Psoas muscle (tissue), 8 donors: ENCODE measurements at regions of chr14 and their contacts with region 1.

Region 1: DNA sequence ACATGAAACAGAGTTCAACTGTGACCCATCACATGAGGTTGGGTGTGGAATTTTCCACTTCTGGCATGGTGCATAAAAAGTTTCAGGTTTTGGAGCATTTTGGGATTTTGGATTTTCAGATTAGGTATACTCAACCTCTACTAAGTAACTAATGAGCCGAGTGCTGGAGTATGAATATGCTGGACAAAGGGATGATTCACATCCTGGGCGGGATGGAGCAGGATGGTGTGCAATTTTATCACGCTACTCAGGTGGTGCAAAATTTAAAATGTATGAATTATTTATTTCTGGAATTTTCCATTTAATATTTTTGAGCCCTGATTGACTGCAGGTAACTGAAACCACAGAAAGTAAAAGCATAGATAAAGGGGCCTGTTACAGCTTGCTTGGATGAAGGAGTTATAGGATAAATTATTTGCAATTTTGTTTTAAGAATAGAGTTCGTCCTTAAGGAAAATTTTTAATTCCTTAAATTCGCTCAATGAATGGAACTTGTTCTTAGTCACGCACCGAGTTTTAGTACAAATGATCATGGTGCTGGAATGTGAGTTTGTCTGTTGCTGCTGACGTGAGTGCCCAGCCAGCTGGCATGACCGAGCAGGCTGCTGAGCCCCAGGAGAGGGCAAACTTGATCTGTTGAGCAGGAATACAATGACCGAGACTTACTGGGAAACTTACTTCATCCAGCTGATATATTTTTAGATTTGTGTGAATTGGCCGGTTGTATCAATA is 176.3 kb downstream of the ESR2 start:
- DNase-seq: peak; percentile 73 to 85
- ATAC-seq: peak; percentile 79 to 88 (median 84)
- H3K4me3 ChIP-seq: peak overlapping the region; percentile 44
- H3K27ac ChIP-seq: peak overlapping the region; percentile 95
- H3K4me1 ChIP-seq: peaks cover 47% of the 10 kb centered on the region
- H3K27me3 ChIP-seq: no peaks in the 10 kb centered on the region
- CTCF ChIP-seq: no peak

Region 2: DNA sequence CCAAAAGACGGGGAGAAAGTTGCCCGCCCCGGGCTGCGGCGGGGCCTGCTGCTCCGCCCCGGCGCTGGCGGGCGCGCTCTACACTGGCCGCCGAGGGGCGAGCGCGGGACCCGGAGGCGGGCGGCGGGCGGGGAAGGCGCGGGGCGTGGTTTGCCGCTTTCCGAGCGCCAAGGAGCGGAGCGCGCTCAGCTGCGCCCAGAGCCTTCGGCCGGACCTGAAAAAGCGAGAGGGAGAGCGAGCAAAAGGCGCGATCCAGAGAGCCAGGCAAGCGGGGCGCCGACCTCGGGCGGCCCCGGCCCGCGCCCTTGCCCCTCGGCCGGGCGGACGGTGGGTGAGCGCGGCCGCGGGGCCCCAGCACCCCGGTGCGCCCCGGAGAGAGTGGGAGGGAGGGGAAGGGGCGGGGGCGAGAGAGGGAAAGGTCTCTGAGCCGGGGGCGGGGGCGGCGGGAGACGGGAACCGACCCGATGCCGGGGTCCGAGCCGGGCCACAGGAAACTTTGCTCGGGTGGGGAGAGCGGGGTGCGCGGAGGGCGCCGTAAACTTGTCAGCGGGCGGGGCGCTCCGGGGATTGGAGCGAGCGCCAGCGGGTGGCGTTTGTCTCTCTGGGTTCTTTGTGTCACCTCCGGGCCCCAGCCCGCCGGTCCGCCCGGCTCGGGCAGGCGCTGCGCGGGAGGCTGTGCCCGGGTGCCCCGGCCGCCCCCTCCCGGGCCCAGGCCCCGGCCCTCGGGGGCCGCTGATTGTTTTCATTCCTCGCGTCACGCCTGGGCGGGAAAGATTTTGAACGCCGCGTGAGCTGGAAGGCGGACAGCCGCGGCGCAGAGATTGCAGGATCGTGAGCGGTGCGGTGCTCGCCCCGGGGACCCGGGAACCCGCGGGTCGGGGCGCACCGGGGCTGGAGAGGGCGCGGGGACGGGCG is 264.8 kb before region 1 on chr14 and contains the start of gene SYNE2:
- intact Hi-C with region 1: no loop called
- DNase-seq: peak; percentile 77 to 87
- ATAC-seq: peak; percentile 92 to 96 (median 94)
- H3K4me3 ChIP-seq: peak within 1 kb of the TSS; percentile 88
- H3K27ac ChIP-seq: peak within 1 kb of the TSS; percentile 94
- H3K4me1 ChIP-seq: peaks cover 22% of the 10 kb centered on the region
- H3K27me3 ChIP-seq: no peaks in the 10 kb centered on the region
- CTCF ChIP-seq: peak; percentile 37
- total RNA-seq, gene SYNE2: 78.3 to 239 (median 152) TPM

Region 3: DNA sequence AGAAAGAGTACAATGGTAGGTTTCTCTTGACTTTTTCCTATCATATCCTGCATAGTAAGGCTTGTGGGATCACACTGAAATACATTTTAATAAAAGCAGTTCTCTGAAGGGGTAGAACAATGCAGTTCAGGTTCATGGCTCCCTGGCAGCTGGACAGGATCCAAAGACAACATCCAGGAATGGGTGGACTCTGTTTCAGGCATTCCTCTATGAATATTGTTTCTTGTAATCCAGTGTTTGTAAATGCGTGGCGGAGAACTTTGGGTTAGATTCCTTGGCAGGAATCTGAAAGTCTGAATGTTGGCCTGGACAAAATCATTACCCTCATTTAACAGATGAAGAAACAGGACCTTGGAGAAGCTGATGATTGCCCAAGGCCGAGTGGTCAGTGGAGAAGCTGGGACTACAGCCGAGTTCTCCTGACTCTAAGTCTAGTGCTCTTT is 221.5 kb before region 1 on chr14:
- intact Hi-C with region 1: no loop called
- DNase-seq: peak in 1 of 2 donors; percentile 37
- ATAC-seq: peak in 3 of 4 donors; percentile 32 to 49 (median 34)
- H3K4me3 ChIP-seq: no peak overlapping the region
- H3K27ac ChIP-seq: peak overlapping the region; percentile 11
- H3K4me1 ChIP-seq: peaks cover 50% of the 10 kb centered on the region
- H3K27me3 ChIP-seq: no peaks in the 10 kb centered on the region
- CTCF ChIP-seq: no peak

Region 4: DNA sequence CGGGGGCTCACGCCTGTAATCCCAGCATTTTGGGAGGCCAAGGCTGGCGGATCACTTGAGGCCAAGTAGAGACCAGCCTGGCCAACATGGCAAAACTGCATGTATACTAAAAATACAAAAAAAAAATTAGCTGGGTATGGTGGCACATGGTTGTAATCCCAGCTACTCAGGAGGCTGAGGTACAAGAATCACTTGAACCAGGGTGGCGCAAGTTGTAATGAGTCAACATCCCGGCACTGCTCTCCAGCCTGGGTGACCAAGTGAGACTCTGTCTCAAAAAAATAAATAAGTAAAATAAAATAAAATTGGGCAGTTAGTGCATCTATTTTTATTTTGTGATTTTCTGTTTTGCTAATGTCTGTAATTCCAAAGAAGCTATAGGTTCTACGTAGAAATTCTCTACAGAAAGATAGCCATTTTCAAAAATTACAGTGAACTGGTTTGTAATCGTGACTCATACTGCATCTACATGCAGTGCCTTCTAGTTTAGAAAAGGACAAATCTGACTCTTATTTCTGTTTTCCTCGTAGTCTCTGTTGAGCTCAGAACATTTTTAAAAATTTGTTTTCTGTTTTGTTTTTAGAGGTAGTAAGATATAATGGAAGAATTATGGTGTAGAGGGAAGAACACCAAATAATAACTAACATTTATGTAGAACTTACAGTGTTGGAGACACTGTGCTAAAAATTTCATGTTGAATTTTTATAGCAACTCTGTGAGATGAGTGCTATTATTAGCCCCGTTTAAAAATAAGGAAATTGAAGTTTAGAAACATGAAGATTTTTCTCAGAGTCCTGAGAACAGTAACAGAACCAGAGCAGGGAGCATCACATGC is 63.9 kb before region 1 on chr14:
- intact Hi-C with region 1: no loop called
- DNase-seq: no peak
- ATAC-seq: no peak
- H3K4me3 ChIP-seq: no peak overlapping the region
- H3K27ac ChIP-seq: no peak overlapping the region
- H3K4me1 ChIP-seq: no peaks in the 10 kb centered on the region
- H3K27me3 ChIP-seq: no peaks in the 10 kb centered on the region
- CTCF ChIP-seq: no peak

Region 5: GRCh38 chr14:64074961-64075612 is 42.8 kb before region 1 on chr14:
- intact Hi-C with region 1: loop called (anchors 5 kb)
- DNase-seq: no peak
- ATAC-seq: no peak
- H3K4me3 ChIP-seq: no peak overlapping the region
- H3K27ac ChIP-seq: no peak overlapping the region
- H3K4me1 ChIP-seq: peaks cover 3% of the 10 kb centered on the region
- H3K27me3 ChIP-seq: no peaks in the 10 kb centered on the region
- CTCF ChIP-seq: no peak

Region 6: DNA sequence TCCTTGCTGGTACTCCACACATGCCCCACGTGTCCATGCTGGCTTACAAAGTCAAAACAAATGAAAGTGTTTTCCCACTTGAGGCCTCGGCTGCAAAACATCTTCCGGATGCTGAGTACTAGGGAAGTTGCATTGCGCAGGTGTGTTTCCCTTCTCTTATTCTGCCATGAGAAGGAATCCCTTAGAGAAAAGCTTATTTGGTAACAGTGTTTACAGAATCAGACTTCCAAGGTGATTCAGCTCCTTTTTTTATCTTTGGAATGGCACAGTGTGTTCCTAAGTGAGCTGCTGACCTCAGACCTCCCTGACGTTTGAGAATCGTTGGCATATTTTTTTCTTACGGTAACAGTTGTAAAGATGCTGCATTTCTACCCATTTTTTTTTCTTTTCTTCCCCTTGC is 35.0 kb before region 1 on chr14:
- intact Hi-C with region 1: loop called in 1 of 2 experiments (anchors 5 kb)
- DNase-seq: no peak
- ATAC-seq: peak; percentile 90 to 96 (median 94)
- H3K4me3 ChIP-seq: no peak overlapping the region
- H3K27ac ChIP-seq: peak overlapping the region; percentile 85
- H3K4me1 ChIP-seq: peaks cover 15% of the 10 kb centered on the region
- H3K27me3 ChIP-seq: no peaks in the 10 kb centered on the region
- CTCF ChIP-seq: no peak

Region 7: GRCh38 chr14:64218344-64219240 is 100.8 kb after region 1 on chr14:
- intact Hi-C with region 1: loop called in 1 of 2 experiments (anchors 5 kb)
- DNase-seq: no peak
- ATAC-seq: peak in 2 of 4 donors; percentile 13 to 16
- H3K4me3 ChIP-seq: peak overlapping the region; percentile 78
- H3K27ac ChIP-seq: peak overlapping the region; percentile 90
- H3K4me1 ChIP-seq: peaks cover 48% of the 10 kb centered on the region
- H3K27me3 ChIP-seq: no peaks in the 10 kb centered on the region
- CTCF ChIP-seq: no peak